ENCODE measurements at regions of chr4 and their contacts with region 1.

Region 1: GRCh38 chr4:7744142-7744804 is 195.4 kb downstream of the AFAP1 start:
- DNase-seq: no peak
- ATAC-seq: peak; percentile 55

Region 2: GRCh38 chr4:6298035-6298434 is 1446.2 kb before region 1 on chr4:
- intact Hi-C with region 1: loop called (anchors 5 kb)
- DNase-seq: no peak
- ATAC-seq: no peak